OCI-LY7 (cell line): ENCODE measurements at regions of chr3 and their contacts with region 1.

Region 1: DNA sequence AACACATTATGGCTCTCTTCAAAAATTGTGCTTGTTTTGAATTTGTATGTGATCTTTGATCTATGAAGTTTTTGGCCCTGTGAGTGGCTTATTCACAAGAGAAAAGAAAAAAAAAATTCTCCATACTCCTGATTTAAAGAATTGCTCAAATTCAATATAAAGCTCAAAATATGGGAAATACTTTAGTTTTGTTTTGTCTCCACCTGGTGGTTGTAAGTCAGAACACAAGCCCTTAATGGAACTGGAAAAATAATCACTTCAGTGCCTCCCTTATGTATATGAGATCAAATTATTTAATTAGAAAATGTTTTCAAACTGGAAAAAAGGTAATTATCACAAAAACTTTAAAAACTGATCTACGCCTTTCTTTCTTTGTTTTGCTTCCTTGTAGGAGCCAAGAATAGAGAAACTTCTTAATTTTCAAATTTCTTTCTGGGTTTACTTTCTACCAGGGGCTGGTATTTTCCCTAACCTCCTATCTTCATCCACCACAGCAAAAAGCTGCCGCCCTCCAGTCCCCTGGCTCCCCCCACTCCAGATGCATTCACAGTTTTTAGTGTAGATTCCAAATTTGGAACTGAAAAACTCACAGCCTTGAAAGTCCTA is 50.6 kb downstream of the SERP1 start:
- DNase-seq: peak; percentile 58
- H3K4me3 ChIP-seq: no peak overlapping the region
- H3K27ac ChIP-seq: no peak overlapping the region
- H3K4me1 ChIP-seq: no peaks in the 10 kb centered on the region
- CTCF ChIP-seq: peak; percentile 96

Region 2: DNA sequence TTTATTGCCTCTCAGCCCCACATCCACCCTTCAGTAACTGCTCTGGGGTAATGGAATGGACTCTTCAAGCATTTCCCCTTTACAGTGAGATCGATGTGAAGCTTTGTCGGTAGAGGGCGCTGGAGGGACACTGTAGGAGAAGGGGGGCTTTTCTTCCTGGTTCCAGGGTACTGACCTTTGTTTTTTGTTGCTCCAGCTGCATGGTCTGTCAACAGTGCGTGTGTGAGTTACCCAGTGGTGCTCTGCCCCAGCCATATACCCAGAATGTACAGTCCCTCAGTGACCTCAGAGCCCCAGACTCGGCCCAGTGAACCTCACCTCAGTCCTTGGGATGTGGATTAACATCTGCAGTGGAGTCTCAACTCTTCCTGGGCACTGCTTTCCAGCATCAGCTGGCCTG is 267.8 kb before region 1 on chr3:
- CTCF ChIA-PET with region 1: no interaction called
- POLR2A ChIA-PET with region 1: no interaction called
- intact Hi-C with region 1: loop called (anchors 1 kb)
- DNase-seq: peak; percentile 70
- H3K4me3 ChIP-seq: no peak overlapping the region
- H3K27ac ChIP-seq: no peak overlapping the region
- H3K4me1 ChIP-seq: no peaks in the 10 kb centered on the region
- CTCF ChIP-seq: peak; percentile 87

Region 3: GRCh38 chr3:150286390-150287147 is 209.1 kb before region 1 on chr3:
- CTCF ChIA-PET with region 1: no interaction called
- POLR2A ChIA-PET with region 1: no interaction called
- intact Hi-C with region 1: loop called (anchors 1 kb)
- DNase-seq: peak; percentile 59
- H3K4me3 ChIP-seq: no peak overlapping the region
- H3K27ac ChIP-seq: no peak overlapping the region
- H3K4me1 ChIP-seq: no peaks in the 10 kb centered on the region
- CTCF ChIP-seq: peak; percentile 75

Region 4: DNA sequence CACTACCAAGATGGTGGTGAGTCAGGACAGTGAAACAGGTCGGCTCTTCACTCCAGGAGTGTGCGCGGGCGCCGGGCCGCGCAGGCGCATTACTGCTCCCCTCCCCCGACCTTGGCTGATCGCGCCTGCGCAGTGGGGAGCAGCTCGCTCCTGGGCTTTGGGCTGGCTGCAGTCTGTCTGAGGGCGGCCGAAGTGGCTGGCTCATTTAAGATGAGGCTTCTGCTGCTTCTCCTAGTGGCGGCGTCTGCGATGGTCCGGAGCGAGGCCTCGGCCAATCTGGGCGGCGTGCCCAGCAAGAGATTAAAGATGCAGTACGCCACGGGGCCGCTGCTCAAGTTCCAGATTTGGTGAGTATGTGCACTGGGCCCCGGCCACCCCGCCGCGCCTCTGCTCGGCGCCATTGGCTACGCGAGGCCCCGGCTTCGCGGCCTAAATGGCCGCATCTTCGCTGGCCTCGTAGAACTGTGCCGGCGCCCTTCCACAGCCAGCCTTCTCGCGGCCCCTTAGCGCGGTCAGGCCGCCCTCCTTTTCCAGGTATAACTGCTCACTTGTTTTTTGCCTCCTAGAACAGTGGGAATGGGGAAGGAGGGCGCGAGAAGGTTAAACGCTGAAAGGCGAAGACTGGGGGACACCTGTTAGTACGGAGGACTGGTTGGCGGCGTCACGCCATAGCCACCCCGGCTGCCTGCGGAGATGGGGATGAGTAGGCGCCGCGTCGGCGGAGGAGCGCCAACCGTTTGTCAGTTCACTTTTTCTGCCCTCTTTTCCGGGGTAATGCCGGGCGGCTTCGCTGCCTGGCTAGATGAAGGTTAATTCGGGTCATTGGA is 107.7 kb after region 1 on chr3 and contains the start of gene SELENOT:
- CTCF ChIA-PET with region 1: no interaction called
- POLR2A ChIA-PET with region 1: no interaction called
- intact Hi-C with region 1: no loop called
- DNase-seq: peak; percentile 95
- H3K4me3 ChIP-seq: peak within 1 kb of the TSS; percentile 88
- H3K27ac ChIP-seq: peak within 1 kb of the TSS; percentile 93
- H3K4me1 ChIP-seq: peaks cover 54% of the 10 kb centered on the region
- CTCF ChIP-seq: 0 out of 2 replicates have a peak, but pooled peaks have one; percentile 29
- total RNA-seq, gene SELENOT: 36.8 and 60.7 TPM in 2 replicates